HCT116 (cell line): ENCODE measurements at regions of chr5 and their contacts with region 1.

Region 1: GRCh38 chr5:40904205-40904993 is 4.9 kb upstream of the C7 start:
- DNase-seq: peak; percentile 59
- ATAC-seq: peak; percentile 100
- H3K4me3 ChIP-seq: no peak overlapping the region
- H3K27ac ChIP-seq: no peak overlapping the region
- H3K4me1 ChIP-seq: no peaks in the 10 kb centered on the region
- H3K27me3 ChIP-seq: no peaks in the 10 kb centered on the region
- CTCF ChIP-seq: peak; percentile 68 to 99 (median 99)
- POLR2A ChIP-seq: no peak
- RAD21 ChIP-seq: peak; percentile 89

Region 2: DNA sequence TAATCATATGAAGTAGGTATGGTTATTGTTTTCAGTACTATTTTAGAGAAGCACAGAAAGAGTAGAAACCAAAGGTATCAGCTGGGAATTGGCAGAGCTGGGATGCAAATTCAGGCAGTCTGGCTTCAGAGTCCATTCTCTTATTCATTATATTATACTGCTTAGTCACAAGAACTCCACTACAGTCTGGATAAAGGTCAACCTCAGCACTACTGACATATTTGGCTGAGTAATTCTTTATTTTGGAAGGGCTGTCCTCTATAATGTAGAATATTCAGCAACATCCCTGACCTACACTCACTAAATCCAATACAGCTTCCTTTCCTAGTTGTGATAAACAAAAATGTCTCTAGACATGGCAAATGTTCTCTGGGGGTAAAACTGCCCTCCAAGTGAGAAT is 187.1 kb before region 1 on chr5:
- CTCF ChIA-PET with region 1: no interaction called
- POLR2A ChIA-PET with region 1: no interaction called
- RAD21 ChIA-PET with region 1: no interaction called
- intact Hi-C with region 1: no loop called
- DNase-seq: no peak
- ATAC-seq: no peak
- H3K4me3 ChIP-seq: no peak overlapping the region
- H3K27ac ChIP-seq: no peak overlapping the region
- H3K4me1 ChIP-seq: no peaks in the 10 kb centered on the region
- H3K27me3 ChIP-seq: no peaks in the 10 kb centered on the region
- CTCF ChIP-seq: no peak
- POLR2A ChIP-seq: no peak
- RAD21 ChIP-seq: no peak

Region 3: GRCh38 chr5:41270423-41271251 is 366.2 kb after region 1 on chr5:
- CTCF ChIA-PET with region 1: interaction called, 3 read pairs
- POLR2A ChIA-PET with region 1: no interaction called
- RAD21 ChIA-PET with region 1: no interaction called
- intact Hi-C with region 1: loop called (anchors 5 kb)
- DNase-seq: peak; percentile 33
- ATAC-seq: peak; percentile 91
- H3K4me3 ChIP-seq: no peak overlapping the region
- H3K27ac ChIP-seq: no peak overlapping the region
- H3K4me1 ChIP-seq: no peaks in the 10 kb centered on the region
- H3K27me3 ChIP-seq: 0 out of 2 replicates have a peak, but pooled peaks cover 5% of the 10 kb centered on the region
- CTCF ChIP-seq: peak; percentile 51 to 77 (median 70); a peak in 5 of 6 replicates
- POLR2A ChIP-seq: no peak
- RAD21 ChIP-seq: peak; percentile 73

Region 4: GRCh38 chr5:41346609-41347008 is 442.2 kb after region 1 on chr5:
- CTCF ChIA-PET with region 1: interaction called, 16 read pairs
- POLR2A ChIA-PET with region 1: no interaction called
- RAD21 ChIA-PET with region 1: no interaction called
- intact Hi-C with region 1: loop called (anchors 2 kb)
- DNase-seq: peak; percentile 3
- ATAC-seq: no peak
- H3K4me3 ChIP-seq: no peak overlapping the region
- H3K27ac ChIP-seq: no peak overlapping the region
- H3K4me1 ChIP-seq: no peaks in the 10 kb centered on the region
- H3K27me3 ChIP-seq: 0 out of 2 replicates have a peak, but pooled peaks cover 6% of the 10 kb centered on the region
- CTCF ChIP-seq: peak in 2 of 3 experiments; percentile 21 to 27; a peak in 1 of 6 replicates
- POLR2A ChIP-seq: no peak
- RAD21 ChIP-seq: peak; percentile 45

Region 5: DNA sequence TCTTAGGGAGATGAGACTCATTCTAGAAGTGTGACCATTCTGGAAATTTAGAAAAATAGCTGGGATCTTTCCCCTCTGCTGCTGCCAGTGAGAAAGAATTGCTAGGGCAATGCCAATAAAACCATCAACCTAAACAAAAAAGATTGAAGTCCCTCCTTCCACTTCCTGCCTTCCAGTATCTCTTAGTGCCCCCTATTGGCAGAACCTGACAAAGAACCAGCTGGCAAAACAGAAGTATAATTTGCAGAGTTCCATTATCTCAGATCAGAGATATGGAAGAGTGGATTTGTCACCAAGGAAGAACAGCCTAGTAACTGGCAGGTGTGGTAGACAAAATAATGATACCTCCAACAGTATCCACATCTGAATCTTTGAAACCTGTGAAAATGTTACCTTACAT is 619.8 kb after region 1 on chr5:
- CTCF ChIA-PET with region 1: interaction called, 5 read pairs
- POLR2A ChIA-PET with region 1: no interaction called
- RAD21 ChIA-PET with region 1: no interaction called
- intact Hi-C with region 1: loop called (anchors 5 kb)
- DNase-seq: no peak
- ATAC-seq: no peak
- H3K4me3 ChIP-seq: no peak overlapping the region
- H3K27ac ChIP-seq: no peak overlapping the region
- H3K4me1 ChIP-seq: peaks cover 0 to 12% of the 10 kb centered on the region in 2 experiments; a peak in 2 of 4 replicates
- H3K27me3 ChIP-seq: no peaks in the 10 kb centered on the region
- CTCF ChIP-seq: peak in 2 of 3 experiments; percentile 42 to 49; a peak in 4 of 6 replicates
- POLR2A ChIP-seq: no peak
- RAD21 ChIP-seq: peak; percentile 42

Region 6: GRCh38 chr5:41641621-41642020 is 737.2 kb after region 1 on chr5:
- CTCF ChIA-PET with region 1: interaction called, 31 read pairs
- POLR2A ChIA-PET with region 1: no interaction called
- RAD21 ChIA-PET with region 1: no interaction called
- intact Hi-C with region 1: loop called (anchors 1 kb)
- DNase-seq: no peak
- ATAC-seq: no peak
- H3K4me3 ChIP-seq: no peak overlapping the region
- H3K27ac ChIP-seq: no peak overlapping the region
- H3K4me1 ChIP-seq: no peaks in the 10 kb centered on the region
- H3K27me3 ChIP-seq: no peaks in the 10 kb centered on the region
- CTCF ChIP-seq: peak in 2 of 3 experiments; percentile 23 to 28; a peak in 1 of 6 replicates
- POLR2A ChIP-seq: no peak
- RAD21 ChIP-seq: peak; percentile 54

Region 7: GRCh38 chr5:41843456-41844370 is 939.3 kb after region 1 on chr5:
- CTCF ChIA-PET with region 1: interaction called, 3 read pairs
- POLR2A ChIA-PET with region 1: no interaction called
- RAD21 ChIA-PET with region 1: no interaction called
- intact Hi-C with region 1: loop called (anchors 1 kb)
- DNase-seq: peak; percentile 37
- ATAC-seq: peak; percentile 54; the same call in 1 of the 2 replicates
- H3K4me3 ChIP-seq: no peak overlapping the region
- H3K27ac ChIP-seq: no peak overlapping the region
- H3K4me1 ChIP-seq: no peaks in the 10 kb centered on the region
- H3K27me3 ChIP-seq: no peaks in the 10 kb centered on the region
- CTCF ChIP-seq: peak; percentile 71 to 89 (median 73)
- POLR2A ChIP-seq: no peak
- RAD21 ChIP-seq: peak; percentile 80